GM10248 (cell line): ENCODE measurements at regions of chr6 and their contacts with region 1.

Region 1: GRCh38 chr6:111068510-111069205 is 18.6 kb upstream of the SLC16A10 start:
- DNase-seq: no peak
- CTCF ChIP-seq: no peak

Region 2: GRCh38 chr6:111057074-111057752 is 11.4 kb before region 1 on chr6:
- CTCF ChIA-PET with region 1: interaction called, 37 read pairs
- POLR2A ChIA-PET with region 1: interaction called, 6 read pairs
- DNase-seq: peak; percentile 48
- CTCF ChIP-seq: peak; percentile 84